ENCODE measurements at regions of chr16 and their contacts with region 1.

Region 1: GRCh38 chr16:29700253-29700987 is 21.4 kb downstream of the QPRT start:
- DNase-seq: peak; percentile 84
- H3K4me3 Mint-ChIP-seq: no peak overlapping the region
- H3K27ac Mint-ChIP-seq: peak overlapping the region; percentile 13
- H3K4me1 Mint-ChIP-seq: peaks cover 29% of the 10 kb centered on the region
- H3K27me3 Mint-ChIP-seq: no peaks in the 10 kb centered on the region

Region 2: GRCh38 chr16:29710227-29711219 is 10.1 kb after region 1 on chr16:
- CTCF ChIA-PET with region 1: interaction called, 6 read pairs
- intact Hi-C with region 1: loop called (anchors 1 kb)
- DNase-seq: peak; percentile 64
- H3K4me3 Mint-ChIP-seq: no peak overlapping the region
- H3K27ac Mint-ChIP-seq: peak overlapping the region; percentile 20
- H3K4me1 Mint-ChIP-seq: peaks cover 15% of the 10 kb centered on the region
- H3K27me3 Mint-ChIP-seq: no peaks in the 10 kb centered on the region

Region 3: GRCh38 chr16:29784901-29785500 is 84.6 kb after region 1 on chr16:
- CTCF ChIA-PET with region 1: interaction called, 35 read pairs
- intact Hi-C with region 1: loop called (anchors 1 kb)
- DNase-seq: peak; percentile 82
- H3K4me3 Mint-ChIP-seq: peak overlapping the region; percentile 61
- H3K27ac Mint-ChIP-seq: no peak overlapping the region
- H3K4me1 Mint-ChIP-seq: peaks cover 25% of the 10 kb centered on the region
- H3K27me3 Mint-ChIP-seq: no peaks in the 10 kb centered on the region

Region 4: GRCh38 chr16:29815793-29816693 is 115.6 kb after region 1 on chr16 and contains the start of gene PAGR1:
- CTCF ChIA-PET with region 1: interaction called, 24 read pairs
- intact Hi-C with region 1: loop called (anchors 1 kb)
- DNase-seq: peak; percentile 99
- H3K4me3 Mint-ChIP-seq: peak within 1 kb of the TSS; percentile 93
- H3K27ac Mint-ChIP-seq: peak within 1 kb of the TSS; percentile 96
- H3K4me1 Mint-ChIP-seq: peaks cover 55% of the 10 kb centered on the region
- H3K27me3 Mint-ChIP-seq: no peaks in the 10 kb centered on the region
- total RNA-seq, gene PAGR1: 16.9 to 19.3 TPM

Region 5: GRCh38 chr16:29862884-29863668 is 162.7 kb after region 1 on chr16 and contains the start of gene CDIPT:
- CTCF ChIA-PET with region 1: interaction called, 5 read pairs
- intact Hi-C with region 1: loop called (anchors 1 kb)
- DNase-seq: peak; percentile 96
- H3K4me3 Mint-ChIP-seq: peak within 1 kb of the TSS; percentile 95
- H3K27ac Mint-ChIP-seq: peak within 1 kb of the TSS; percentile 99
- H3K4me1 Mint-ChIP-seq: peaks cover 22% of the 10 kb centered on the region
- H3K27me3 Mint-ChIP-seq: no peaks in the 10 kb centered on the region
- total RNA-seq, gene CDIPT: 29.0 to 31.0 TPM

Measured in activated naive CD4-positive, alpha-beta T cell treated with anti-CD3 and anti-CD28 coated beads for 36 hours (primary cell).